Activated CD8-positive, alpha-beta T cell treated with anti-CD3 and anti-CD28 coated beads for 36 hours (primary cell): ENCODE measurements at regions of chr9 and their contacts with region 1.

Region 1: DNA sequence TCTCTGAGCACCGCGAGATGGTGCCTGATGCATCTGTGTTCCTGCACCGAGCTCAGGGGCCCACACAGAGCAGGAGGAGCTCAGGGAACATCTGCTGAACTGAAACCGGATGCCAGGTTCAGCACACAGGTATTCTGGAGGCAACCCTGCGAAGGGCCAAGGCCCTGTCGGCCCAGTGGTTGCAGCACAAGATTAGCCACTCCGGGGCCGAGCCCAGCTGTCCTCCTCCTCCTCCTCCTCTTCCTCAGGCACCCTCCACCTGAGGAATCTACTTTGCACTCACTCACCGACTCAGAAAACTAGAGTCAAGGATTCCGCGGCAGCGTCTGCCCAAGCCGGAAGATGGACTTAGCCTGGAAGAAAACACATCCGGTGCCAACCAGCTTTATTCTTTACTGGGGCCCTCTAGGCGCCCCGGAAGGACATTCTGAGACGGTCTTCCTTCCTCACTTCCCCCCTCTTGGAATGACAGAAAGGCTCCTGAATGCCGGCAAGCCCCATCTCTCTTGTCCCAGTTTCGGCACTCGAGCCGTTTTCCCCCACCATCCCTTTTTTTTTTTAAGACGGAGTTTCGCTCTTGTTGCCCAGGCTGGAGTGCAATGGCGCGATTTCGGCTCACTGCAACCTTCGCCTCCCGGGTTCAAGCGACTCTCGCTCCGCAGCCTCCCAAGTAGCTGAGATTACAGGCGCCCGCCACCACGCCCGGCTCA is at the start of gene ZBTB6:
- DNase-seq: peak; percentile 86
- ATAC-seq: peak; percentile 96
- H3K4me3 Mint-ChIP-seq: peak within 1 kb of the TSS; percentile 98
- H3K27ac Mint-ChIP-seq: peak within 1 kb of the TSS; percentile 96
- H3K4me1 Mint-ChIP-seq: peaks cover 33% of the 10 kb centered on the region
- H3K27me3 Mint-ChIP-seq: no peaks in the 10 kb centered on the region
- CTCF ChIP-seq: no peak
- total RNA-seq, gene ZBTB6: 9.7 to 9.8 TPM

Region 2: DNA sequence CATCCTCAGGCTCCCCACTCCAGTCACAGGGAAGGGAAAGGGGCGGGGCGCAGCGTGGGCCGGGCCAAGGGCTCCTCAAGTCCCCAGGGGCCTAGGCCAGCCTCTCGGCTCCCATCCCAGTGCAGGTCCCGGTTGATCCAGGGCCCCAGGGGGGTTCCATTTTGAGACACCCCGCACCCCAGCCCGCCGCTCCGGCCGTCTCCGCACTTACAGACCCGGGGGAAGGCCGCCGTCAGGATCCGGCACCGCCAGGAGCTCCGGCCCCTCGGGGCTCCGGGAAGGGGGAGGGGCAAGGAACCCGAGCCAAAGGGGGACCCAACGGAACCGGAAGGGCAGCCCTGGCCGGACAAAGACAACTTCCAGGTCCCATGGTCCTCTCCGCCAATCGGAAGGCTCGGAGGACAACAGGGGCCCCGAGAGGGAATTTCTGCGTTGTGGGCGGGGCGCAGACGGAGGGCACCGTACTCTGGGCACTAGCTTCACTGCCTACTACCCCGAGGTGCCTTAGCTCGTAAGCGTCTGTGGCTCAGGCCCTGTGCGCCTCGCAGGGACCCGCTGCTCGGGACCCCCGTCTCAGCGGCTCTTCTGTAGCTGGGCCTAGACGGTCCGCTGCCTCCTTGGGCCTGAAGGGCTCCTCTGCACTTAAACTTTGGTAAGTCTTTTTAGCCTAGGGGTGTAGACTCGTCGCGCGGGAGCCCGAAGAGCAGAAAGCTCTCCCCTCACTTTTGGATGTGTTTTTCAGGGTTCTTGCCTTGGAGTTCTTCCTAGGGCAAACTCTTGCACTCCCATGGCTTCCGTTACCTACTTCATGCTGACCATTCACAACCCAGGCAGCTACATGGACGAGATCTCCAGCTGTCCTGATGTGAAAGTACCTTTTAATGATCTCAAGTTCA is 18.4 kb after region 1 on chr9 and contains the start of gene ZBTB26:
- CTCF ChIA-PET with region 1: interaction called, 4 read pairs
- POLR2A ChIA-PET with region 1: interaction called, 15 read pairs
- intact Hi-C with region 1: no loop called
- DNase-seq: peak; percentile 95
- ATAC-seq: peak; percentile 99
- H3K4me3 Mint-ChIP-seq: no peak within 1 kb of the TSS
- H3K27ac Mint-ChIP-seq: peak within 1 kb of the TSS; percentile 94
- H3K4me1 Mint-ChIP-seq: peaks cover 12% of the 10 kb centered on the region
- H3K27me3 Mint-ChIP-seq: no peaks in the 10 kb centered on the region
- CTCF ChIP-seq: no peak
- total RNA-seq, gene ZBTB26: 5.3 to 6.2 TPM

Region 3: DNA sequence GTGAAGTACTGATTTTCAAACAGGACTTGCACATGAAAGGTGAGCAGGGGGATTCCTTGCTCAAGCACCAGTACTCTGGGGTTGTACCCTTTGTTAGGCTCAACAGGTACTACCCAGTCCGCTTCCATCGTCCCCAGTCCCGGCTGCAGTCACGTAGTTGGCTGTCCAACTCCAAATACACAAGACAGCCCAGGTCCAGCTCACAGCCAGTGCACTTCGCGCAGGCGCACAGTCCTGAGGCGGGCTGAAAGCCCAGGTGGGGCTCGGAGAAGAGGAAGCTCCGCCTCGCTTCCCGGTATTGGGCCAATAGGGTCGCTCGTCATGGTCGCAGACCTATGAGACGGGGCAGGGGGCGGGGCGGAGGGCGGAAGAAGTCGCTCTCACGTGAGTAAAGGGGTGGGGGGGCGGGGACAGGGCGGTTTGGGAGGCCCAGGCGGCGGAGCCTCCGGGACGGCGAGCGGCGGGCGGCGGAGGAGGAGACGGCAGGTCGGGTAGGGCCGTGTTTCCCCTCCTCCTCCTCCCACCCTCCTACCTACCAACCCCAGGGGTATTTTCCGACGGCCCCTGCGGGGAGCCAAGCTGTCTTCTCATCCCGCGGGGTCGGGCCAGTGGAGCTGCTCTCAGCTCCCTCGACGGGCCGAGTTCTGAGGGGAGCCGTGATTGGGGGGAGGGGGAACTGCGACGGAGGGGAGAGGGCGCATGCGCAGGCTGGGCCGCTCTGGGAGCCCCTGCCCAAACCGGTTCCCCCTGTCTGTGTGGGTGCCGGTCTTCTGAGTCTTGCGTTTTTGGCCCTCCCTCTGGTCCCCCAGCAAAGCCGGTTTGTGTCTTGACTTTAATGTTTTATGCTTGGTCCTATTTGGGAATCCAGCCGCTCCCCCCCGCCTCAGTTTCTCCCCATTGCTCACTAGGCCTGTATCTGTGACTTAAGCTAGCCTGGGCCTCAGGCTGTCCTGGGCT is 27.8 kb after region 1 on chr9 and contains the start of gene RABGAP1:
- CTCF ChIA-PET with region 1: interaction called, 3 read pairs
- POLR2A ChIA-PET with region 1: interaction called, 11 read pairs
- intact Hi-C with region 1: no loop called
- DNase-seq: peak; percentile 99
- ATAC-seq: peak; percentile 99
- H3K4me3 Mint-ChIP-seq: peak within 1 kb of the TSS; percentile 99
- H3K27ac Mint-ChIP-seq: peak within 1 kb of the TSS; percentile 92
- H3K4me1 Mint-ChIP-seq: peaks cover 38% of the 10 kb centered on the region
- H3K27me3 Mint-ChIP-seq: no peaks in the 10 kb centered on the region
- CTCF ChIP-seq: no peak
- total RNA-seq, gene RABGAP1: 19.8 to 22.0 TPM